HEK293 (cell line): ENCODE measurements at regions of chr1 and their contacts with region 1.

Region 1: DNA sequence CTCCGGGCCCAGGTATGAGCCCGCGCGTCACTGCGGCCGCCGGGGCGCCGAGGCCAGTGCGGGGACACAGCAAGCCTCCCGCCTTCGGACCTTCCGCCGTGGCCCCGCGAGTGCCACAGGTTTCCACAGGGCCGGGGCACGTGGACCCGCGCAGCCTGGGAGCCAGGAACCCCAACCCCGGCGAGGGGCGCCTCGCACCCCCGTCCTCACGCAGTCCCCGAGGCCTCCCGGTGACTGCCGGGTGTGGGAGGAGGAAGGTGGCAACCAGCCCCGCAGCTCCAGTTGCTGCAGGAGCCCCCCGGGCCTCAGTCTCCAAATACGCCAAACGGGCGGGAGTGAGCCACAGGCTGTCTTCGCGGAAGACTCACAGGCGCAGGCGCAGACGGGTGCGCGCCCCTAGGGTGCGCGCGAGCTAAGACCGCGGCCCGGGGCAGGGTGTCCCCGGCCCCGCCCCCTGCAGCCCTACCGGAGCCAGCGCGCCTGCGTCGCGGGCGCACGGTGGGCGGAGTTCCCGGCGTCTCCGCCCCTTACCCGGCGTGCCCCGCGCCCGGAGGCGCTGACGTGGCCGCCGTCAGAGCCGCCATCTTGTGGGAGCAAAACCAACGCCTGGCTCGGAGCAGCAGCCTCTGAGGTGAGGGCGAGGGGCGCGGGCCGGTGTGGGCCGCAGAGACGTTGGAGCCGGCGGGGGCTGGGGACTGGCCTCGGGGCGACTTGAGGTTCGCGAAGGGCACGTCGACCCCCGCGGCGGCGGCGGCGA is at the start of gene ARF1:
- H3K4me3 ChIP-seq: peak within 1 kb of the TSS; percentile 76
- H3K27ac ChIP-seq: peak within 1 kb of the TSS; percentile 93
- H3K4me1 ChIP-seq: peaks cover 26% of the 10 kb centered on the region
- CTCF ChIP-seq: peak; percentile 52

Region 2: GRCh38 chr1:228059634-228060457 is 22.5 kb before region 1 on chr1:
- CTCF ChIA-PET with region 1: no interaction called
- POLR2A ChIA-PET with region 1: interaction called, 12 read pairs
- H3K4me3 ChIP-seq: peak overlapping the region; percentile 40
- H3K27ac ChIP-seq: peak overlapping the region; percentile 26; the same call in 1 of the 2 replicates
- H3K4me1 ChIP-seq: peaks cover 4% of the 10 kb centered on the region
- CTCF ChIP-seq: no peak

Region 3: GRCh38 chr1:228101614-228101993 is 19.3 kb after region 1 on chr1:
- CTCF ChIA-PET with region 1: interaction called, 7 read pairs
- POLR2A ChIA-PET with region 1: interaction called, 21 read pairs
- H3K4me3 ChIP-seq: peak overlapping the region; percentile 88
- H3K27ac ChIP-seq: peak overlapping the region; percentile 82
- H3K4me1 ChIP-seq: no peaks in the 10 kb centered on the region; the same call in 1 of the 2 replicates
- CTCF ChIP-seq: no peak